Activated naive CD8-positive, alpha-beta T cell treated with anti-CD3 and anti-CD28 coated beads, Interleukin-2, amount 10 ng/mL, durations not matched to agents 7 days and 5 days (primary cell): ENCODE measurements at regions of chr18 and their contacts with region 1.

Region 1: GRCh38 chr18:63320046-63320689 is 599 bp upstream of the BCL2 start:
- DNase-seq: peak; percentile 85
- ATAC-seq: peak; percentile 80
- H3K4me3 Mint-ChIP-seq: peak overlapping the region; percentile 89
- H3K27ac Mint-ChIP-seq: peak overlapping the region; percentile 89
- H3K4me1 Mint-ChIP-seq: peaks cover 15% of the 10 kb centered on the region
- H3K27me3 Mint-ChIP-seq: no peaks in the 10 kb centered on the region

Region 2: GRCh38 chr18:62844850-62845643 is 475.1 kb before region 1 on chr18:
- POLR2A ChIA-PET with region 1: no interaction called
- DNase-seq: no peak
- ATAC-seq: no peak
- H3K4me3 Mint-ChIP-seq: peak overlapping the region; percentile 63
- H3K27ac Mint-ChIP-seq: peak overlapping the region; percentile 61
- H3K4me1 Mint-ChIP-seq: peaks cover 11% of the 10 kb centered on the region
- H3K27me3 Mint-ChIP-seq: no peaks in the 10 kb centered on the region

Region 3: GRCh38 chr18:63155169-63155852 is 164.9 kb before region 1 on chr18:
- POLR2A ChIA-PET with region 1: interaction called, 28 read pairs
- DNase-seq: peak; percentile 80
- ATAC-seq: peak; percentile 77
- H3K4me3 Mint-ChIP-seq: peak overlapping the region; percentile 81
- H3K27ac Mint-ChIP-seq: peak overlapping the region; percentile 90
- H3K4me1 Mint-ChIP-seq: peaks cover 92% of the 10 kb centered on the region
- H3K27me3 Mint-ChIP-seq: no peaks in the 10 kb centered on the region

Region 4: DNA sequence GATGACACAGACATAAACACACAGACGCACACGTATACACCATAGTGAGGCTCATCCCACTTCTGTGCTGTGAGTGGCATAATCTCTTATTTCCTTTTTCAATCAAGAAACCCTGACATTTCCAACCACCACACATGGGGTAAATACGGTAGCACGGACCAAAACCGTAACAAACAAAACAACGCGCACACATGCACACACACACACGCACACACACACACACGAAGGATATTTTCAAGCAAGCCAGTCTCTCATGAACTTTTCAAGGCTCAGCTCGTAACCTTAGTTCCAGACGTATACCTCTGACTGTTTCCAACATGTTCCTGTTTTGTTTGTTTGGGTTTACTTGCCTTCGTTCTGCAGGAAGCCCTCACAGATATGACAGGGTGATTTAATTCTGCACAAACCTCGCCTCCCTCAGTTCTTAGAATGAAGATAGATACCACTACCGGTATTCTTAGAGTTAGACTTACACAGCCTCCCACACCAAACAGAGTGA is 120.4 kb before region 1 on chr18:
- POLR2A ChIA-PET with region 1: interaction called, 43 read pairs
- DNase-seq: no peak
- ATAC-seq: peak; percentile 87
- H3K4me3 Mint-ChIP-seq: no peak overlapping the region
- H3K27ac Mint-ChIP-seq: no peak overlapping the region
- H3K4me1 Mint-ChIP-seq: peaks cover 34% of the 10 kb centered on the region
- H3K27me3 Mint-ChIP-seq: no peaks in the 10 kb centered on the region

Region 5: GRCh38 chr18:63216516-63217311 is 103.5 kb before region 1 on chr18:
- POLR2A ChIA-PET with region 1: interaction called, 124 read pairs
- DNase-seq: no peak
- ATAC-seq: peak; percentile 40
- H3K4me3 Mint-ChIP-seq: peak overlapping the region; percentile 77
- H3K27ac Mint-ChIP-seq: peak overlapping the region; percentile 86
- H3K4me1 Mint-ChIP-seq: peaks cover 83% of the 10 kb centered on the region
- H3K27me3 Mint-ChIP-seq: no peaks in the 10 kb centered on the region

Region 6: DNA sequence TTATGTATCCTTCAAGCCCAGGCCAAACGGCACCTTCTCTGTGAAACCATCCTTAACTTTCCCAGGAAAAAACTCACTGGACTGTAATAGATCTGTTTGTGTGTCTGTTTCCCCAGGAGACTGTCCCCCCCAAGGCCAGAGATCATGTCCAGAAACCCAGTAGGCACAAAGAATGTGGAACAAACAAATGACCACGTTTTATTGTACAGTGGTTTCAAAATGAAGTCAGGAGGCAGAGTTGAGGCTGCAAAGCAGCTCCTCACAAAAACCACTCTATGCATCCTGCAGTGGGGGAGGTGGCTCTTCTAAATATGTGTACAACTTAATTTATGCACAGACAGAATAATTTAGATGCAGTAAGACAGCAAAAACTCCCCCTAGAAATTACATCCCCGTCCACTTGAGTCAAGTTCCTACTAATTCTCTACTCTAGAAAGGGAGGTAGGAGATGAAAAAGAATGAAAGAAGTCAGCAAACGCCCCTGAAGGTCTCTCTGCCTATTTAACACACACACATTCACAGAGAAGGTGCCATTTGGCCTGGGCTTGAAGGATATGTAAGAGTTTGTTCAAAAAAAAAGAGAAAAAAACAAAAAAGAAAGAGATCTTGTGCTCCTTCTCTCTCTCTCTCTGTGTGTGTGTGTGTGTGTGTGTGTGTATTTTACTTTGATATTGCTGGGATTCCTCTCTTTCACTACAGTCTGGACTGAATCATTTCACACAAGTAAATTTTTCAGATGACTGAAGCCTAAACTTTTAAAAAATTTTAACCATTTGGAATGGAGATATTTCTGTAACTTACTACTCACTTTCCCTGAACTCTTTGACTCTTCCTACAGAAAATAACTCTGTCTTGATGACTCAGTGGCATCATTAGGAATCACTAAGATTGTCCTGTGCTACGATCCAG is 20.1 kb before region 1 on chr18:
- POLR2A ChIA-PET with region 1: interaction called, 17 read pairs
- DNase-seq: no peak
- ATAC-seq: peak; percentile 71
- H3K4me3 Mint-ChIP-seq: peak overlapping the region; percentile 70
- H3K27ac Mint-ChIP-seq: peak overlapping the region; percentile 77
- H3K4me1 Mint-ChIP-seq: peaks cover 73% of the 10 kb centered on the region
- H3K27me3 Mint-ChIP-seq: no peaks in the 10 kb centered on the region